ENCODE measurements at regions of chr19 and their contacts with region 1.

Region 1: GRCh38 chr19:35592226-35592625 is 6.3 kb downstream of the PMIS2 start:
- DNase-seq: peak; percentile 68
- H3K4me3 Mint-ChIP-seq: no peak overlapping the region
- H3K27ac Mint-ChIP-seq: no peak overlapping the region
- H3K4me1 Mint-ChIP-seq: peaks cover 7% of the 10 kb centered on the region
- H3K27me3 Mint-ChIP-seq: no peaks in the 10 kb centered on the region

Region 2: GRCh38 chr19:35509861-35510625 is 82.2 kb before region 1 on chr19:
- intact Hi-C with region 1: loop called (anchors 1 kb)
- DNase-seq: peak; percentile 91
- H3K4me3 Mint-ChIP-seq: peak overlapping the region; percentile 62
- H3K27ac Mint-ChIP-seq: no peak overlapping the region
- H3K4me1 Mint-ChIP-seq: peaks cover 9% of the 10 kb centered on the region
- H3K27me3 Mint-ChIP-seq: peaks cover 60% of the 10 kb centered on the region

Region 3: DNA sequence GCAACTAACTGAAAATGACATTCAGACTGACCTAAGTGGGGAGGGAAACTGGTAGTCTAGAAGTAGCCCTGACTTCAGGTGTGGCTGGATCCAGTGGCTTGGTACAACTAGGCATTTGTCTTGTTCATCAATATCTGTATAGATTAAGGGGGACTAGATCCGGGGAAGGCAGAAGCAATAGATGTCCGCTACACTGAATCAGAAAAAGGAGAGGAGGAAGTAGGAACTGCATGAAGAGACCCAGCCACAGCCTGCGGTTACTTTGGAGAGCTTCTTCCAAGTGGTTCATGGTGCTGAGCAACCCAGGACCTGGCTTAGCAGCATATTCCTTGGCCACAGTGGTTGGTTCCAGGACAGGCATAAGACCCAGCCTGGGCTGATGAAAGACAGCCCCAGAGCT is 230.4 kb after region 1 on chr19:
- intact Hi-C with region 1: no loop called
- DNase-seq: no peak
- H3K4me3 Mint-ChIP-seq: no peak overlapping the region
- H3K27ac Mint-ChIP-seq: no peak overlapping the region
- H3K4me1 Mint-ChIP-seq: peaks cover 3% of the 10 kb centered on the region
- H3K27me3 Mint-ChIP-seq: peaks cover 8% of the 10 kb centered on the region

Measured in activated CD4-positive, alpha-beta T cell treated with anti-CD3 and anti-CD28 coated beads, Interleukin-2, amount 10 ng/mL, durations not matched to agents 24 days and 14 days (primary cell).